ENCODE measurements at regions of chr1 and their contacts with region 1.

Region 1: GRCh38 chr1:112809253-112809684 is 94.1 kb upstream of the PPM1J start:
- H3K4me3 Mint-ChIP-seq: no peak overlapping the region
- H3K27ac Mint-ChIP-seq: no peak overlapping the region
- H3K4me1 Mint-ChIP-seq: peaks cover 17% of the 10 kb centered on the region
- H3K27me3 Mint-ChIP-seq: peaks cover 39% of the 10 kb centered on the region

Region 2: GRCh38 chr1:112840631-112841624 is 31.7 kb after region 1 on chr1:
- intact Hi-C with region 1: loop called (anchors 5 kb)
- H3K4me3 Mint-ChIP-seq: no peak overlapping the region
- H3K27ac Mint-ChIP-seq: peak overlapping the region; percentile 82
- H3K4me1 Mint-ChIP-seq: peaks cover 49% of the 10 kb centered on the region
- H3K27me3 Mint-ChIP-seq: peaks cover 5% of the 10 kb centered on the region

Region 3: DNA sequence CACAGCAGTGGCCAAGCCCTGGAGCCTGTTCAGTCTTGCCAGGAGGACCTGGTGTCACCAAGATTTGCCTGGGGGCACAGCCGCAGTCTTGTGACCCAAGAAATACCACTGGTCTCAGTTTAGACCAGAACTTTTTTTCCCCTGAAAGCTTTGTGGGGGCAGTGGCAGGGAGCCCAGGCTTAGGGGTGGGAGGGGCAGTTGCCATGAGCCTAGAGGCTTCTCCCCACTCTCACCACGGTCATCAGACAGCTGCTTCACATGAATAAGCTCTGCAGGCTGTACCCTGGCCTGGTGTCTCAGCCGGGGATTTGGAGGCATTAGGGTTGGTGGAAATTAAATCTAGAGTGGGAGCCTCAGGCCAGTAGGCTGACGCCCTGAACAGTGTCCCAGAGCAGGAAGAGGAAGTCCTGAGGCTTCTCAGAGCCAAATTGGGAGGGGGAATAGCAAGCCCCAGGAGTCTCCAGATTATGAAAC is 73.0 kb after region 1 on chr1:
- intact Hi-C with region 1: loop called (anchors 5 kb)
- H3K4me3 Mint-ChIP-seq: peak overlapping the region; percentile 43
- H3K27ac Mint-ChIP-seq: peak overlapping the region; percentile 98
- H3K4me1 Mint-ChIP-seq: peaks cover 42% of the 10 kb centered on the region
- H3K27me3 Mint-ChIP-seq: peaks cover 10% of the 10 kb centered on the region

Region 4: GRCh38 chr1:112925015-112925414 is 115.7 kb after region 1 on chr1:
- intact Hi-C with region 1: no loop called
- H3K4me3 Mint-ChIP-seq: no peak overlapping the region
- H3K27ac Mint-ChIP-seq: no peak overlapping the region
- H3K4me1 Mint-ChIP-seq: no peaks in the 10 kb centered on the region
- H3K27me3 Mint-ChIP-seq: no peaks in the 10 kb centered on the region

Region 5: GRCh38 chr1:113042285-113043143 is 233.2 kb after region 1 on chr1:
- intact Hi-C with region 1: loop called (anchors 1 kb)
- H3K4me3 Mint-ChIP-seq: no peak overlapping the region
- H3K27ac Mint-ChIP-seq: peak overlapping the region; percentile 80
- H3K4me1 Mint-ChIP-seq: peaks cover 42% of the 10 kb centered on the region
- H3K27me3 Mint-ChIP-seq: peaks cover 2% of the 10 kb centered on the region